IMR-90 (cell line): ENCODE measurements at regions of chr6 and their contacts with region 1.

Region 1: DNA sequence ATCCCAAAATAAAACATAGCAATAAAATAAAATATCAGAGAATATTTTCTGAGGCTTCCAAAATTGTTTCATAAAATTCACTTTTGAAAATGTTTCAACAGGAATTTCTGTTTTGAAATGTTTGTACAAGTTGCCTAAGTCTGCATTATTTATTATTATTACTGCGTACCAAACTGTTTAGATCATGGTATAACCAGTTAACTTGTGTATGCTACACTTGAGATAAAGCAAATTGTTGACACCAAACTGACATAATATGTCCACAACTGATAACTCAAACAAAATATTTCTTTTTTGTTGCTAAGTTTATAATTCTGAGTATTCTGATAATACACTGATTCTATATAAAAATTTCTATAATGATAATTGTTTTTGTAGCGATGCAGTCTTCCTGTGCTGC is 531.8 kb upstream of the EYS start:
- DNase-seq: peak; percentile 1
- ATAC-seq: no peak
- H3K4me3 ChIP-seq: no peak overlapping the region
- H3K27ac ChIP-seq: no peak overlapping the region
- H3K4me1 ChIP-seq: no peaks in the 10 kb centered on the region
- H3K27me3 ChIP-seq: no peaks in the 10 kb centered on the region
- CTCF ChIP-seq: no peak
- POLR2A ChIP-seq: no peak
- RAD21 ChIP-seq: no peak

Region 2: GRCh38 chr6:66096679-66097078 is 142.2 kb before region 1 on chr6:
- CTCF ChIA-PET with region 1: no interaction called
- POLR2A ChIA-PET with region 1: no interaction called
- dilution Hi-C with region 1: no loop called
- in situ Hi-C with region 1: no loop called
- intact Hi-C with region 1: no loop called
- DNase-seq: no peak
- ATAC-seq: no peak
- H3K4me3 ChIP-seq: no peak overlapping the region
- H3K27ac ChIP-seq: no peak overlapping the region
- H3K4me1 ChIP-seq: no peaks in the 10 kb centered on the region
- H3K27me3 ChIP-seq: no peaks in the 10 kb centered on the region
- CTCF ChIP-seq: no peak
- POLR2A ChIP-seq: no peak
- RAD21 ChIP-seq: no peak

Region 3: GRCh38 chr6:66226109-66226508 is 12.7 kb before region 1 on chr6:
- CTCF ChIA-PET with region 1: no interaction called
- POLR2A ChIA-PET with region 1: no interaction called
- dilution Hi-C with region 1: no loop called
- in situ Hi-C with region 1: no loop called
- intact Hi-C with region 1: loop called (anchors 1 kb)
- DNase-seq: no peak
- ATAC-seq: no peak
- H3K4me3 ChIP-seq: no peak overlapping the region
- H3K27ac ChIP-seq: no peak overlapping the region
- H3K4me1 ChIP-seq: no peaks in the 10 kb centered on the region
- H3K27me3 ChIP-seq: no peaks in the 10 kb centered on the region
- CTCF ChIP-seq: no peak
- POLR2A ChIP-seq: no peak
- RAD21 ChIP-seq: no peak